ENCODE measurements at regions of chr9 and their contacts with region 1.

Region 1: DNA sequence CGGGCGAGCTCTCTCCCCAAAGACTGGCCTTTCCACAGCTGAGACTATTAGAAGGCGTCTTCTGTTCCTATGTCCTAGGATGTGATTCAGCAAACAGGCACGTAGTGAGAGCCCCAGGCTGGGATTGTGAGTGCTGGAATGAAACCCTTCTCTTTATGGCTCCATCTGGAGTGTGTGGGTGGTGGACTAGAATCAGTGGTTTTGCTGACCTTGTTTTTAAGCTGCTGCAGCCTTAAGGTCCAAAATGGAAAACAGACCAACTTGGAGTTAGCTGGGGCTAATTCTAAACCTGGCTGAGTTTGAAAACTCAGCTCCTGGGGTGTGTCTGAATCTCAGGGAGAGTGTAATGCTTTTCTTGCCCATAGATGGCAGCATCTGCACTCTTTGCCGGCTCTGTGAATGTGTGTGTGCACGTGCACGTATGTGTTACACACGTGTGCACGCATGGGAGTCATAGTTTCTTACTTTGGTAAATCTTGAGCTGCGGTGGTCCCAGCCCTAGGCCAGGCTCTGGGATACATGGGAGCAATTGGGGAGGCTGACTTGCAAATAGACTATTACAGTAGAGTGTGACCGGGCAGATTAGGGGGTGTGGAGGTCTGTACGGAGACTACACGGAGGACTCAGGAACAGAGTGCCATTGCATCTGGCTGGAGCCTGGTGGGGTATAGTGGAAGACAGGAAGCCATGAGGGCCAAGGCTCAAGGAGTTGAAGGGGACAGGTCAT is 10.7 kb downstream of the GSN start:
- H3K4me3 ChIP-seq: no peak overlapping the region
- H3K27ac ChIP-seq: no peak overlapping the region
- H3K4me1 ChIP-seq: peaks cover 3% of the 10 kb centered on the region; the same call in 1 of the 2 replicates
- CTCF ChIP-seq: peak; percentile 56

Region 2: GRCh38 chr9:121107041-121107440 is 171.7 kb before region 1 on chr9:
- CTCF ChIA-PET with region 1: no interaction called
- POLR2A ChIA-PET with region 1: no interaction called
- H3K4me3 ChIP-seq: no peak overlapping the region
- H3K27ac ChIP-seq: no peak overlapping the region
- H3K4me1 ChIP-seq: no peaks in the 10 kb centered on the region
- CTCF ChIP-seq: no peak

Region 3: GRCh38 chr9:121201738-121202533 is 76.8 kb before region 1 on chr9 and contains the start of gene RAB14:
- CTCF ChIA-PET with region 1: interaction called, 14 read pairs
- POLR2A ChIA-PET with region 1: interaction called, 4 read pairs
- H3K4me3 ChIP-seq: peak within 1 kb of the TSS; percentile 95
- H3K27ac ChIP-seq: peak within 1 kb of the TSS; percentile 87
- H3K4me1 ChIP-seq: peaks cover 4% of the 10 kb centered on the region; the same call in 1 of the 2 replicates
- CTCF ChIP-seq: peak; percentile 80

Region 4: DNA sequence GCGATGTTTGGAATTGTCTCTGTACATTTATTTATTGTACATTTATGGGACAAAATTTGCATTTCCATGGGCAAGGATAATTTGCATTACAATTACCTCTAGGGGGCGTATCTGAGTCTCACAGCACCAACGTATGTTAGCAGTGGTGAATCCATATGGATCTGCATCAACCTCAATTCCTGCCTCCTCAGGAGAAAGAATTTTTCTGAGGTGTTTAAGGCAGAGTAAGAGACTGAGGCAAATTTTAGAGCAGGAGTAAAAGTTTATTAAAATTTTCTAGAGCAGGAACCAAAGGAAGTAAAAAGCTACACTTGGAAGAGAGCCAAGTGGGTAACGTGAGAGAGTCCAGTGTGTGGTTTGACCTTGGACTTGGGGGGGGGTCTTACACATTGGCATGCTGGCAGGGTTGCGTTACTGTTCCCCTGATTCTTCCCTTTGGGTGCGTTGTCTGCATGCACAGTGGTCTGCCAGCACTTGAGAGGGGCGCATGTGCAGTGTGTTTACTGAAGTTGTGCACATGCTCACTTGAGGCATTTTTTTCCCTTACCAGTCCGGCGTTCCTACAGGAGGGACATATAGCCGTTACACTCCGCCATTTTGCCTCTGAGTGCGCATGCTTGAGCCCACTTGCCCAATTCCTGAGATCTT is 56.0 kb before region 1 on chr9:
- CTCF ChIA-PET with region 1: interaction called, 15 read pairs
- POLR2A ChIA-PET with region 1: no interaction called
- H3K4me3 ChIP-seq: no peak overlapping the region
- H3K27ac ChIP-seq: no peak overlapping the region
- H3K4me1 ChIP-seq: peaks cover 3% of the 10 kb centered on the region; the same call in 1 of the 2 replicates
- CTCF ChIP-seq: no peak

Region 5: DNA sequence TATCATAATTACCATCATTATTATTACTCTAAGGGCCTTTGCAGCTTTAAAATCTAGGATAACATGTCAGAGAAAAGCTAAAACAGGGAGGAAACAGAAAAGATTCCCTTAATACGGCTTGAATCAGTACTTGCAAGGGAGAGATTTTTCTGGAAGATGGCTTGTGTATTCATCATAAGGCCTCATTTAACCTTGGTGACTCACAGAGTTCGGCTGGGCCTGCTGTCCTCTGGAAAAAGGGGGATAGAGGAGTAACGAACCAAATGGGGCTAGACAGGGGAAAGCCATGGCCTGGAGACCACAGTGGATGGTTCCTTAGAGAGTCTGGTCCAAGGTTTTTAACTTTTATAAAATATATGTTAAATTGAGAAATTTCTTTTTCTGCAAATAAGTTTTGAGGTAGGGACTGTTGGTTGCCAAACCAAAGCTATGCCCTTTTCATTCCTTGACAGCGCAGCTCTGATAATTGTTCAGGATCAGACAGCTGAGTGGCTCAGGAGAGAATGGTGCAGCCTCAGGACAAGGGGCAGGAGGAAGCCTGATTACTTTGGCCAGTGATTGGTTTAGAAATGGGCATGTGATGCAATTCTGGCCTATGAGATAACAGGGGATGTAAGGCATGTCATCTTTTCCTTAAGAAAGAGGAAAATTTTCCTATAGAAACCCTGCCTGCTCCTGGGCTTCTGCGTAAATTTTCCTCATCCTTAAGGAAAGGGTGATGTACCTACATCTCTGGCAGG is 36.3 kb before region 1 on chr9:
- CTCF ChIA-PET with region 1: interaction called, 12 read pairs
- POLR2A ChIA-PET with region 1: no interaction called
- H3K4me3 ChIP-seq: no peak overlapping the region
- H3K27ac ChIP-seq: no peak overlapping the region
- H3K4me1 ChIP-seq: no peaks in the 10 kb centered on the region
- CTCF ChIP-seq: no peak

Region 6: GRCh38 chr9:121267689-121268597 is 10.8 kb before region 1 on chr9 and contains the start of gene GSN:
- CTCF ChIA-PET with region 1: interaction called, 70 read pairs
- POLR2A ChIA-PET with region 1: interaction called, 17 read pairs
- H3K4me3 ChIP-seq: peak within 1 kb of the TSS; percentile 66
- H3K27ac ChIP-seq: no peak within 1 kb of the TSS
- H3K4me1 ChIP-seq: peaks cover 2% of the 10 kb centered on the region; the same call in 1 of the 2 replicates
- CTCF ChIP-seq: no peak

Region 7: DNA sequence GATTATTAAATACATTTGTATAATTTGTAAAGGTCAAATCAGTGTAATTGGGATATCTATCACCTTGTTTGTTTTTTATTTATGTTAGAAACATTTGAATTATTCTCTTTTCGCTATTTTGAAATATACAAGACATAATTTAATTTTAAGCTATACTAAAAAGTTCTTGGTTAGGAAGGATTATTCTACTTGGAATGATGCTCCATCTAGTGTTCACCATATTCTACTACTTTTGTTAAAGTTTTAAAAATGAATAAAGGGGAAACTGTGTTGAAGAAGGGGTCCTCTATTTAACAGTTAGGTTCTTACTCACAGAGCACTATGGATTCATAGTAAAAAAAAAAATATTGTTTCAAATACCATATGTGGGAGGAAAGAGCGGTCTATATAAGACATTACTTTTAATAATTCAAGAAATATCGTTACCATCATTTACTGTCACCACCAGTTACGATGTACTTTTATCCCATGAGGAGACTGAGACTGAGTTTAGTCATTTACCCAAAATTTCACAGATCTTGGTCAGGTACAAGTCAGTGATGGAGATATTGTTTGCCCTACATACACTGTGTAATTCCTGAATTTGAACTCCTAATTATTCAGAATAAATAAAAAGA is 97.6 kb after region 1 on chr9:
- CTCF ChIA-PET with region 1: interaction called, 12 read pairs
- POLR2A ChIA-PET with region 1: no interaction called
- H3K4me3 ChIP-seq: no peak overlapping the region
- H3K27ac ChIP-seq: no peak overlapping the region
- H3K4me1 ChIP-seq: no peaks in the 10 kb centered on the region
- CTCF ChIP-seq: no peak

Measured in HEK293 (cell line).